Esophagus muscularis mucosa (tissue), 4 donors: ENCODE measurements at regions of chr4 and their contacts with region 1.

Region 1: DNA sequence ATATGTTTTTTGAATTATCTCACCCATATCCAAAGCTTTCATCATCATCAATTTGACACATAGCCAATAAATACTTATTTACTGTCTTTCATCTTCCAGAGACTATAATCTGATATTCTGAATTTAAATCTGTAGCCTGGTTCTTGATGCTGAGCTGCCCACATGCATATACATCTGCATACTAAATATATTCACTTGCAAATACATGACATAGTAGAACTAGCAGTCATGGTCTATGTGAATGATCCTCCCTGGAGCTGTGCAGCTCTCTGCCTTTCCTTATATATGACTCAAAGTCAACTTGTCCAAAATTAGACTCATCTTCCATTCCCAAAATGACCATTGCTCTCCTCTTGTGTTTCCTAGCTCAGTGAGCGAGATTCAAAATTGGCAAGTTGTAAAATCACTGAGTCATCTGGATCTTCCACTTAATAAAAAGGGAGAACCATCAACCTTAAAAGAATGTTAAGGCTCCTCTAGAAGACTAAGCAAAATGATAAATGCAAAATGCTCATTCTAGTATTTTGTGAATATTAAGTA is 448.2 kb downstream of the PPARGC1A start:
- DNase-seq: no peak
- H3K4me3 ChIP-seq: no peak overlapping the region
- H3K27ac ChIP-seq: no peak overlapping the region
- H3K4me1 ChIP-seq: no peaks in the 10 kb centered on the region
- H3K27me3 ChIP-seq: no peaks in the 10 kb centered on the region
- CTCF ChIP-seq: no peak
- EP300 ChIP-seq: no peak
- POLR2A ChIP-seq: no peak

Region 2: GRCh38 chr4:23674694-23675093 is 233.1 kb after region 1 on chr4:
- intact Hi-C with region 1: loop called (anchors 5 kb)
- DNase-seq: no peak
- H3K4me3 ChIP-seq: no peak overlapping the region
- H3K27ac ChIP-seq: no peak overlapping the region
- H3K4me1 ChIP-seq: no peaks in the 10 kb centered on the region
- H3K27me3 ChIP-seq: no peaks in the 10 kb centered on the region
- CTCF ChIP-seq: no peak
- EP300 ChIP-seq: no peak
- POLR2A ChIP-seq: no peak